GM12878 (cell line): ENCODE measurements at regions of chr17 and their contacts with region 1.

Region 1: GRCh38 chr17:27236717-27237315 is 57.1 kb upstream of the WSB1 start:
- DNase-seq: no peak
- ATAC-seq: peak; percentile 50
- H3K4me3 ChIP-seq: no peak overlapping the region
- H3K27ac ChIP-seq: no peak overlapping the region
- H3K4me1 ChIP-seq: peaks cover 28% of the 10 kb centered on the region
- H3K27me3 ChIP-seq: no peaks in the 10 kb centered on the region
- CTCF ChIP-seq: peak; percentile 81 to 88 (median 87)
- EP300 ChIP-seq: no peak
- POLR2A ChIP-seq: no peak
- RAD21 ChIP-seq: peak; percentile 94

Region 2: DNA sequence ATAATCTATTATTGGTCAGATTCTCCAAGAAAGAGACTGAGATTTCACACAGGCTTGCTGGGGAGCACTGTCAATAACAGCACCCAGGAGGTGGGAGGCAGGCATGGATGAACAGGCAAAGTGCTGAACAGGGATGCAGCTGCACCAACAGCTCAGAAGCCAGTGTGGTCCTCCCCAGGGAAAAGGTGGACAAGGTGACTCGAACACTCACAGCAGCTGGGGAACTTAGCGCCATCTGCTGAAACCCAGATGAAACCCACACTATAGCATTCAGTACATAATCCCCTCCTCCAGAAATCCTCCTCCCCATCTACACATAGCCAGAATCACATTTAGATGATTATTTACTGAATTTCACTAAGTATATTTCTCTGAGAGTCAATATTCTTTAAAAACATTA is 198.1 kb before region 1 on chr17:
- CTCF ChIA-PET with region 1: no interaction called
- POLR2A ChIA-PET with region 1: no interaction called
- RAD21 ChIA-PET with region 1: no interaction called
- SMC1A ChIA-PET with region 1: no interaction called
- in situ Hi-C with region 1: no loop called
- intact Hi-C with region 1: no loop called
- DNase-seq: no peak
- ATAC-seq: no peak
- H3K4me3 ChIP-seq: no peak overlapping the region
- H3K27ac ChIP-seq: no peak overlapping the region
- H3K4me1 ChIP-seq: no peaks in the 10 kb centered on the region
- H3K27me3 ChIP-seq: no peaks in the 10 kb centered on the region
- CTCF ChIP-seq: no peak; a peak in 1 of 6 replicates
- EP300 ChIP-seq: no peak
- POLR2A ChIP-seq: no peak
- RAD21 ChIP-seq: no peak

Region 3: GRCh38 chr17:27199948-27200347 is 36.9 kb before region 1 on chr17:
- CTCF ChIA-PET with region 1: interaction called, 120 read pairs
- POLR2A ChIA-PET with region 1: no interaction called
- RAD21 ChIA-PET with region 1: interaction called, 36 read pairs
- SMC1A ChIA-PET with region 1: interaction called, 48 read pairs
- in situ Hi-C with region 1: no loop called
- intact Hi-C with region 1: loop called (anchors 5 kb)
- DNase-seq: no peak
- ATAC-seq: no peak
- H3K4me3 ChIP-seq: no peak overlapping the region
- H3K27ac ChIP-seq: no peak overlapping the region
- H3K4me1 ChIP-seq: no peaks in the 10 kb centered on the region
- H3K27me3 ChIP-seq: no peaks in the 10 kb centered on the region
- CTCF ChIP-seq: no peak
- EP300 ChIP-seq: no peak
- POLR2A ChIP-seq: no peak
- RAD21 ChIP-seq: no peak

Region 4: GRCh38 chr17:27282054-27282551 is 45.3 kb after region 1 on chr17:
- CTCF ChIA-PET with region 1: interaction called, 5 read pairs
- POLR2A ChIA-PET with region 1: no interaction called
- RAD21 ChIA-PET with region 1: interaction called, 13 read pairs
- SMC1A ChIA-PET with region 1: interaction called, 9 read pairs
- in situ Hi-C with region 1: no loop called
- intact Hi-C with region 1: no loop called
- DNase-seq: peak; percentile 49
- ATAC-seq: peak; percentile 98
- H3K4me3 ChIP-seq: no peak overlapping the region
- H3K27ac ChIP-seq: peak overlapping the region; percentile 62
- H3K4me1 ChIP-seq: peaks cover 14% of the 10 kb centered on the region
- H3K27me3 ChIP-seq: no peaks in the 10 kb centered on the region
- CTCF ChIP-seq: no peak
- EP300 ChIP-seq: peak in 1 of 2 experiments; percentile 53; a peak in 1 of 4 replicates
- POLR2A ChIP-seq: no peak
- RAD21 ChIP-seq: no peak

Region 5: GRCh38 chr17:27332485-27333409 is 95.9 kb after region 1 on chr17:
- CTCF ChIA-PET with region 1: interaction called, 96 read pairs
- POLR2A ChIA-PET with region 1: interaction called, 8 read pairs
- RAD21 ChIA-PET with region 1: interaction called, 156 read pairs
- SMC1A ChIA-PET with region 1: interaction called, 77 read pairs
- in situ Hi-C with region 1: loop called (anchors 5 kb)
- intact Hi-C with region 1: loop called (anchors 1 kb)
- DNase-seq: peak; percentile 81
- ATAC-seq: peak; percentile 94
- H3K4me3 ChIP-seq: peak overlapping the region; percentile 67
- H3K27ac ChIP-seq: peak overlapping the region; percentile 72
- H3K4me1 ChIP-seq: peaks cover 20% of the 10 kb centered on the region
- H3K27me3 ChIP-seq: no peaks in the 10 kb centered on the region
- CTCF ChIP-seq: peak; percentile 64 to 96 (median 83); a peak in 5 of 6 replicates
- EP300 ChIP-seq: peak; percentile 48 to 59; a peak in 3 of 4 replicates
- POLR2A ChIP-seq: no peak
- RAD21 ChIP-seq: peak; percentile 87

Region 6: GRCh38 chr17:27381007-27381501 is 144.2 kb after region 1 on chr17:
- CTCF ChIA-PET with region 1: interaction called, 20 read pairs
- POLR2A ChIA-PET with region 1: no interaction called
- RAD21 ChIA-PET with region 1: interaction called, 10 read pairs
- SMC1A ChIA-PET with region 1: interaction called, 20 read pairs
- in situ Hi-C with region 1: no loop called
- intact Hi-C with region 1: no loop called
- DNase-seq: peak; percentile 27
- ATAC-seq: peak; percentile 96
- H3K4me3 ChIP-seq: no peak overlapping the region
- H3K27ac ChIP-seq: no peak overlapping the region
- H3K4me1 ChIP-seq: peaks cover 14% of the 10 kb centered on the region
- H3K27me3 ChIP-seq: no peaks in the 10 kb centered on the region
- CTCF ChIP-seq: peak; percentile 100; a peak in 5 of 6 replicates
- EP300 ChIP-seq: no peak
- POLR2A ChIP-seq: no peak
- RAD21 ChIP-seq: peak; percentile 67

Region 7: GRCh38 chr17:27630607-27631410 is 394.0 kb after region 1 on chr17 and contains the start of gene LGALS9:
- CTCF ChIA-PET with region 1: interaction called, 23 read pairs
- POLR2A ChIA-PET with region 1: no interaction called
- RAD21 ChIA-PET with region 1: interaction called, 6 read pairs
- SMC1A ChIA-PET with region 1: no interaction called
- in situ Hi-C with region 1: no loop called
- intact Hi-C with region 1: no loop called
- DNase-seq: peak; percentile 53
- ATAC-seq: peak; percentile 83
- H3K4me3 ChIP-seq: peak within 1 kb of the TSS; percentile 78
- H3K27ac ChIP-seq: peak within 1 kb of the TSS; percentile 89
- H3K4me1 ChIP-seq: peaks cover 11% of the 10 kb centered on the region
- H3K27me3 ChIP-seq: no peaks in the 10 kb centered on the region
- CTCF ChIP-seq: no peak
- EP300 ChIP-seq: no peak
- POLR2A ChIP-seq: peak; percentile 79
- RAD21 ChIP-seq: no peak
- polyA plus RNA-seq, gene LGALS9: 22.5 to 30.2 TPM